ENCODE measurements at regions of chrX and their contacts with region 1.

Region 1: GRCh38 chrX:100685284-100685996 is 41.4 kb downstream of the SRPX2 start:
- DNase-seq: peak; percentile 17 to 64 (median 48)
- ATAC-seq: peak; percentile 59
- H3K4me3 ChIP-seq: no peak overlapping the region
- H3K4me3 Mint-ChIP-seq: no peak overlapping the region
- H3K27ac ChIP-seq: no peak overlapping the region
- H3K27ac Mint-ChIP-seq: no peak overlapping the region
- H3K4me1 ChIP-seq: no peaks in the 10 kb centered on the region
- H3K4me1 Mint-ChIP-seq: peaks cover 4% of the 10 kb centered on the region
- H3K27me3 ChIP-seq: no peaks in the 10 kb centered on the region
- H3K27me3 Mint-ChIP-seq: no peaks in the 10 kb centered on the region
- CTCF ChIP-seq: peak; percentile 52

Region 2: GRCh38 chrX:100768679-100769338 is 83.4 kb after region 1 on chrX:
- CTCF ChIA-PET with region 1: interaction called, 6 read pairs
- POLR2A ChIA-PET with region 1: no interaction called
- intact Hi-C with region 1: loop called (anchors 1 kb)
- DNase-seq: peak; percentile 69 to 92 (median 75)
- ATAC-seq: peak; percentile 99
- H3K4me3 ChIP-seq: no peak overlapping the region
- H3K4me3 Mint-ChIP-seq: no peak overlapping the region
- H3K27ac ChIP-seq: no peak overlapping the region
- H3K27ac Mint-ChIP-seq: no peak overlapping the region
- H3K4me1 ChIP-seq: no peaks in the 10 kb centered on the region
- H3K4me1 Mint-ChIP-seq: no peaks in the 10 kb centered on the region
- H3K27me3 ChIP-seq: no peaks in the 10 kb centered on the region
- H3K27me3 Mint-ChIP-seq: peaks cover 3% of the 10 kb centered on the region
- CTCF ChIP-seq: peak; percentile 90

Region 3: GRCh38 chrX:101206471-101206870 is 521.0 kb after region 1 on chrX:
- CTCF ChIA-PET with region 1: interaction called, 3 read pairs
- POLR2A ChIA-PET with region 1: no interaction called
- intact Hi-C with region 1: loop called (anchors 5 kb)
- DNase-seq: peak in 2 of 9 experiments; percentile 16 to 33
- ATAC-seq: peak; percentile 52
- H3K4me3 ChIP-seq: no peak overlapping the region
- H3K4me3 Mint-ChIP-seq: no peak overlapping the region
- H3K27ac ChIP-seq: no peak overlapping the region
- H3K27ac Mint-ChIP-seq: no peak overlapping the region
- H3K4me1 ChIP-seq: no peaks in the 10 kb centered on the region
- H3K4me1 Mint-ChIP-seq: no peaks in the 10 kb centered on the region
- H3K27me3 ChIP-seq: no peaks in the 10 kb centered on the region
- H3K27me3 Mint-ChIP-seq: no peaks in the 10 kb centered on the region
- CTCF ChIP-seq: no peak

Region 4: GRCh38 chrX:101287402-101287801 is 602.0 kb after region 1 on chrX:
- CTCF ChIA-PET with region 1: interaction called, 3 read pairs
- POLR2A ChIA-PET with region 1: no interaction called
- intact Hi-C with region 1: loop called in 1 of 2 experiments (anchors 2 kb)
- DNase-seq: peak in 3 of 9 experiments; percentile 12 to 42 (median 32)
- ATAC-seq: no peak
- H3K4me3 ChIP-seq: no peak overlapping the region
- H3K4me3 Mint-ChIP-seq: no peak overlapping the region
- H3K27ac ChIP-seq: no peak overlapping the region
- H3K27ac Mint-ChIP-seq: no peak overlapping the region
- H3K4me1 ChIP-seq: no peaks in the 10 kb centered on the region
- H3K4me1 Mint-ChIP-seq: no peaks in the 10 kb centered on the region
- H3K27me3 ChIP-seq: no peaks in the 10 kb centered on the region
- H3K27me3 Mint-ChIP-seq: peaks cover 5% of the 10 kb centered on the region
- CTCF ChIP-seq: peak; percentile 52